Activated CD8-positive, alpha-beta T cell treated with anti-CD3 and anti-CD28 coated beads, Interleukin-2, amount 10 ng/mL, durations not matched to agents 7 days and 5 days (primary cell): ENCODE measurements at regions of chr10 and their contacts with region 1.

Region 1: GRCh38 chr10:88932539-88933256 is 19.9 kb downstream of the ACTA2 start:
- DNase-seq: peak; percentile 64
- ATAC-seq: peak; percentile 70
- H3K4me3 Mint-ChIP-seq: no peak overlapping the region
- H3K27ac Mint-ChIP-seq: peak overlapping the region; percentile 12
- H3K4me1 Mint-ChIP-seq: peaks cover 26% of the 10 kb centered on the region
- H3K27me3 Mint-ChIP-seq: no peaks in the 10 kb centered on the region

Region 2: GRCh38 chr10:88565072-88565471 is 367.6 kb before region 1 on chr10:
- CTCF ChIA-PET with region 1: interaction called, 13 read pairs
- POLR2A ChIA-PET with region 1: no interaction called
- DNase-seq: no peak
- ATAC-seq: peak; percentile 47
- H3K4me3 Mint-ChIP-seq: no peak overlapping the region
- H3K27ac Mint-ChIP-seq: no peak overlapping the region
- H3K4me1 Mint-ChIP-seq: no peaks in the 10 kb centered on the region
- H3K27me3 Mint-ChIP-seq: peaks cover 13% of the 10 kb centered on the region

Region 3: DNA sequence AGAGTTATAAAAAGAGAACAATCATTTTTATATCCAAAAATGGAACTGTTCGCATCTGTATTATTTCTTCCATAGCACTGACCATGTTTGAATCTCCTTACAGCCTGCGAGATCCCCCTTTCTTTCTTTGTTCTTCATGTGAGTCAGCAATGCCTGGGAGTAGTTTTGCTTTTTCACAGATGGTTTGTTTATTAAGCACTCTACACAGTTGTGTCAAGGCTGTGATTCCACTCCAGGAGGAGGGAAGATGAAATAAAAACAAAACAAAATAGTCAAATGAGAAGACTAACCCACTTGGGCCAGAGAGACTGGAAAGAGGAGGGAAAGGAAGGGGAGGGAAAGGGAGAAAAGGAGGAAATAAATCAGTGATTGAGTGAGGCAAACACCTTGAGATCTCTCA is 260.7 kb before region 1 on chr10:
- CTCF ChIA-PET with region 1: no interaction called
- POLR2A ChIA-PET with region 1: no interaction called
- DNase-seq: no peak
- ATAC-seq: no peak
- H3K4me3 Mint-ChIP-seq: no peak overlapping the region
- H3K27ac Mint-ChIP-seq: no peak overlapping the region
- H3K4me1 Mint-ChIP-seq: peaks cover 6% of the 10 kb centered on the region
- H3K27me3 Mint-ChIP-seq: peaks cover 3% of the 10 kb centered on the region

Region 4: DNA sequence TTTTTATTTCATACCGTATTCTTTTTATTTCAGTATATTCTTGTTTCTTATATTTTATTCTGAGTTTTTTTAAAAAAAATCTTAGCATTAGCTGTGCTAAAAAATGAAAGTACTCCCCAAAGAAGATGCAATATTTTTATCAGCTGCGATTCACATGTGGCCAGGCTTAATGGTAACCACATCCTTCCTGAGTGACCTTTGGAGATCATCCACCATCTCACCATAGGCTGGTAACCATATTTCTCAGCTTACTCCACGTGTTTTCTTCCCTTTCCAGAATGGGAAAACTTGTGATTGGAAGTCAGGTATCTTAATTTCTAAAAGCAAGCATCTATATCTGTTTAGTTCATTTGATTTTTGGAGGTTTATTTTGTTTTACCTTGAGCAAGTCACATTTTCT is 149.0 kb before region 1 on chr10:
- CTCF ChIA-PET with region 1: no interaction called
- POLR2A ChIA-PET with region 1: no interaction called
- DNase-seq: no peak
- ATAC-seq: no peak
- H3K4me3 Mint-ChIP-seq: no peak overlapping the region
- H3K27ac Mint-ChIP-seq: no peak overlapping the region
- H3K4me1 Mint-ChIP-seq: peaks cover 6% of the 10 kb centered on the region
- H3K27me3 Mint-ChIP-seq: peaks cover 3% of the 10 kb centered on the region

Region 5: GRCh38 chr10:88835096-88835909 is 97.4 kb before region 1 on chr10:
- CTCF ChIA-PET with region 1: interaction called, 281 read pairs
- POLR2A ChIA-PET with region 1: interaction called, 10 read pairs
- DNase-seq: peak; percentile 94
- ATAC-seq: peak; percentile 92
- H3K4me3 Mint-ChIP-seq: no peak overlapping the region
- H3K27ac Mint-ChIP-seq: no peak overlapping the region
- H3K4me1 Mint-ChIP-seq: peaks cover 40% of the 10 kb centered on the region
- H3K27me3 Mint-ChIP-seq: no peaks in the 10 kb centered on the region

Region 6: DNA sequence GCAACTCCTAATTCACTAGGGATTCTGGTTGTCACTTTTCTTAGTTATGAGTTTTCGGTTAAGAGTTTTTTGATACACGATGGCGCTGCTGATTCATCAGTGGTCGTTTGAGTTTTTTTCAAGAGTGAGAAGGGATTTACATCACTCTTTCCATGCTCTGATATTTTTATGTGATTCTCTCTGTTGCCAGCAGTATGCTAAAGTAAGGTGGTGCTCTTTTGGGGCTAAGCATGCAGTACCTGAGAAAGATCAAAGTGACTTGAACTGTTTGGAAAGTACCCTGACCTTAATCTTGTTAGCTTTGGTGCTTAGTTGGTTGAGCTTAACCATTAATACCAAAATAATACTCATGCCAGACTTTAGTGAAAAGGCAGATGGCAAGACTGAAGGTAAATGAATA is 24.5 kb before region 1 on chr10:
- CTCF ChIA-PET with region 1: interaction called, 22 read pairs
- POLR2A ChIA-PET with region 1: interaction called, 3 read pairs
- DNase-seq: no peak
- ATAC-seq: no peak
- H3K4me3 Mint-ChIP-seq: no peak overlapping the region
- H3K27ac Mint-ChIP-seq: no peak overlapping the region
- H3K4me1 Mint-ChIP-seq: peaks cover 3% of the 10 kb centered on the region
- H3K27me3 Mint-ChIP-seq: no peaks in the 10 kb centered on the region

Region 7: DNA sequence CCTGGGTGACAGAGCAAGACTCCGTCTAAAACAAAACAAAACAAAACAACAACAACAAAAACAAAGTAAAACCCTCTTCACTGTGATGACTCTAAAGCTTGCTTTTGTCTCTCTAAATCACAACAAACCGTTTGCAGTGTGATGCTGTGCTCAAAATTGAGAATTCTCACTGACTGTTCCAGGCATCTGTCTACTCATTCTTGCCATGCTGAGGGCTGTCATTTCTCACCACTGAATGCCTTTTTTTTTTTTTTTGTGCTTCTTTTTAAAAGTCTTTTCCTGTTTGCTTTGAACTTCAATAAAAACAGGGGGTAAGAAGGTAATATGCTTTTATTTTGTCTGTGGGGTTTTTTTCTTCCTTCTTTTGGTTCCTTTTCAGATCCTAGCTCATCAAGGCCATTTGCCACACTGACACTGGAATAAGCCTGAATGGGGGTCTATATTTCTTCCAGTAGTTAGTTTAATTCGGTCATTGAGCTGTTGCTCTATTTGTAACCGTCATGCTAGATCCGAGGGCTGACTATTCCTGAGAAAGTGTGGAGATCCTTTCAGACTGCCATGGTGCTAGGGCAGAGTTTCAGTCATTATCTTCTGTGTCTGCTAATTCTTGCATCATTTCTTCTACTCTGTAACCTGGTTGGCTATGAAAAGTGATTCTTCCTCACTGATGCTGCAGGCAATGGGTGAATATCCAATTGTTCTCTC is 68.5 kb after region 1 on chr10:
- CTCF ChIA-PET with region 1: interaction called, 98 read pairs
- POLR2A ChIA-PET with region 1: no interaction called
- DNase-seq: peak; percentile 52
- ATAC-seq: peak; percentile 75
- H3K4me3 Mint-ChIP-seq: peak overlapping the region; percentile 59
- H3K27ac Mint-ChIP-seq: peak overlapping the region; percentile 70
- H3K4me1 Mint-ChIP-seq: peaks cover 66% of the 10 kb centered on the region
- H3K27me3 Mint-ChIP-seq: no peaks in the 10 kb centered on the region

Region 8: DNA sequence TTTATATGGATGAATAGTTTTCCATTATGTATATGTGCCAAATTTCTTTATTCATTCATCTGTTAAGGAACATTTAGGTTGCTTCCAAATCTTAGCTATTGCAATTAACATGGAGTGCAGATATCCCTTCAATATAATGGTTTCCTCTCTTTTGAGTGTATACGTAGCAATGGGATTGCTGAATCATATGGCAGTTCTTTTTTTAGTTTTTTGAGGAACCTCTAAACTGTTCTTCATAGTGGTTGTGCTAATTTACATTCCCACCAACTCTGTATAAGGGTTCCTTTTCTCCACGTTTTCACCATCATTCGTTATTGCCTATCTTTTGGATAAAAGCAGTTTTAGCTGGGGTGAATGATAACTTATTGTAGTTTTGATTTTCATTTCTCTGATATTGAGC is 104.4 kb after region 1 on chr10:
- CTCF ChIA-PET with region 1: interaction called, 14 read pairs
- POLR2A ChIA-PET with region 1: no interaction called
- DNase-seq: no peak
- ATAC-seq: no peak
- H3K4me3 Mint-ChIP-seq: no peak overlapping the region
- H3K27ac Mint-ChIP-seq: no peak overlapping the region
- H3K4me1 Mint-ChIP-seq: peaks cover 6% of the 10 kb centered on the region
- H3K27me3 Mint-ChIP-seq: no peaks in the 10 kb centered on the region